GM12878 (cell line): ENCODE measurements at regions of chr5 and their contacts with region 1.

Region 1: DNA sequence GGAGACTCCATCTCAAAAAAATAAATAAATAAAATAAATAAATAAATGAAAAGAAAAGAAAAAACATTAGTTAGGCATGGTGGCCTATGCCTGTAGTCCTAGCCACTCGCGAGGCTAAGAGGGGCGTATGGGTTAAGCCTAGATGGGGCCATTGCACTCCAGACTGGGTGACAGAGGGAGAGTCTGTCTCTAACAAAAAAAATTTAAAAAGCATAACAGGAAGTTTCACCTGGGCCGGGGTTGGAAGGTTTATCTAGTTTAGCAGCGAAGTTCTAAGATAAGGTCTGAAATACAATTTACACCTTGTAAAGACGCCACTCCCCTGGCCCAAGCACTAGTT is 18.0 kb downstream of the ZMAT2 start:
- DNase-seq: no peak
- ATAC-seq: peak; percentile 11; the same call in 2 of the 3 replicates
- H3K4me3 ChIP-seq: no peak overlapping the region
- H3K27ac ChIP-seq: no peak overlapping the region
- H3K4me1 ChIP-seq: no peaks in the 10 kb centered on the region
- H3K27me3 ChIP-seq: no peaks in the 10 kb centered on the region
- CTCF ChIP-seq: no peak
- EP300 ChIP-seq: no peak
- POLR2A ChIP-seq: no peak
- RAD21 ChIP-seq: no peak

Region 2: DNA sequence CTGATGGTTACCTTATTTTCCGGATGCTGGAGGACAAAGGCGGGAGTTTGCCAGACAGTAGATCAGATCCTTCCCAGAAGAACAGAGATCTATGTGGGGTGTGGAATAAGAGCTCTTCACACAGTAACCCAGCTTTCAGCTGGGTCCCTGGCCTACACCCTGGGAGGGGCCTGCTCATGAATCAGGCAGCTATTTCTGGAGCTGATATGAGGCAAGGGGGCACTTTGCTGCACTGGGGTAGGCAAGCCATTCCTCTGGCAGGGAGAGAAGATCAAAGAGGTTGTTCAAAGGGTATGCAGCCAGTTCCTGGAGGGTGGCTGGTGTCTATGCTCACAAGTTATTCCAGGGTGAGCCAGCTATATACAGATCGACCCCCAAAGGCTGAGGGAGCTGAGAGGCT is 494.6 kb before region 1 on chr5:
- CTCF ChIA-PET with region 1: no interaction called
- POLR2A ChIA-PET with region 1: no interaction called
- RAD21 ChIA-PET with region 1: no interaction called
- SMC1A ChIA-PET with region 1: no interaction called
- in situ Hi-C with region 1: no loop called
- intact Hi-C with region 1: no loop called
- DNase-seq: no peak
- ATAC-seq: no peak
- H3K4me3 ChIP-seq: no peak overlapping the region
- H3K27ac ChIP-seq: no peak overlapping the region
- H3K4me1 ChIP-seq: peaks cover 30% of the 10 kb centered on the region
- H3K27me3 ChIP-seq: no peaks in the 10 kb centered on the region
- CTCF ChIP-seq: no peak
- EP300 ChIP-seq: no peak
- POLR2A ChIP-seq: no peak
- RAD21 ChIP-seq: no peak

Region 3: DNA sequence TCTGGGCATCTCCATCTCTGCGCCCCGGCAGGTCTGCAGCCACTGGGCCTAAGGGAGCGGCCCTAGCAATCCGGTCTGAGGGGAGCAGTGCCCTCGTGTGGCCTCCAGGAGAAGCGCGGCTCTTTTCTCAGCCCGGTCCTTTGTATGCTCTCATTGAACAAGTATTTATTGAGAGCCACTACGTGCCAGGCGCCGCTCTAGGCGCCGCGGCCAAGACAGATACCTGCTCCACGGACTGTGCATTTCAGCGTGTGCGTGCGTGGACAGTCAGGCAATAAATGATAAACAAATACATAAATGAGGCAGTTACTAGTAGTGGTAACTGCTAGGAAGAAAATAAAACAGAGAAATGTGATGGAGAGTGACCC is 360.5 kb before region 1 on chr5:
- CTCF ChIA-PET with region 1: interaction called, 36 read pairs
- POLR2A ChIA-PET with region 1: no interaction called
- RAD21 ChIA-PET with region 1: interaction called, 34 read pairs
- SMC1A ChIA-PET with region 1: interaction called, 3 read pairs
- in situ Hi-C with region 1: loop called (anchors 5 kb)
- intact Hi-C with region 1: loop called (anchors 2 kb)
- DNase-seq: no peak
- ATAC-seq: peak; percentile 98
- H3K4me3 ChIP-seq: no peak overlapping the region
- H3K27ac ChIP-seq: no peak overlapping the region
- H3K4me1 ChIP-seq: peaks cover 11% of the 10 kb centered on the region
- H3K27me3 ChIP-seq: no peaks in the 10 kb centered on the region
- CTCF ChIP-seq: peak; percentile 92 to 97 (median 96)
- EP300 ChIP-seq: no peak
- POLR2A ChIP-seq: no peak
- RAD21 ChIP-seq: peak; percentile 85

Region 4: DNA sequence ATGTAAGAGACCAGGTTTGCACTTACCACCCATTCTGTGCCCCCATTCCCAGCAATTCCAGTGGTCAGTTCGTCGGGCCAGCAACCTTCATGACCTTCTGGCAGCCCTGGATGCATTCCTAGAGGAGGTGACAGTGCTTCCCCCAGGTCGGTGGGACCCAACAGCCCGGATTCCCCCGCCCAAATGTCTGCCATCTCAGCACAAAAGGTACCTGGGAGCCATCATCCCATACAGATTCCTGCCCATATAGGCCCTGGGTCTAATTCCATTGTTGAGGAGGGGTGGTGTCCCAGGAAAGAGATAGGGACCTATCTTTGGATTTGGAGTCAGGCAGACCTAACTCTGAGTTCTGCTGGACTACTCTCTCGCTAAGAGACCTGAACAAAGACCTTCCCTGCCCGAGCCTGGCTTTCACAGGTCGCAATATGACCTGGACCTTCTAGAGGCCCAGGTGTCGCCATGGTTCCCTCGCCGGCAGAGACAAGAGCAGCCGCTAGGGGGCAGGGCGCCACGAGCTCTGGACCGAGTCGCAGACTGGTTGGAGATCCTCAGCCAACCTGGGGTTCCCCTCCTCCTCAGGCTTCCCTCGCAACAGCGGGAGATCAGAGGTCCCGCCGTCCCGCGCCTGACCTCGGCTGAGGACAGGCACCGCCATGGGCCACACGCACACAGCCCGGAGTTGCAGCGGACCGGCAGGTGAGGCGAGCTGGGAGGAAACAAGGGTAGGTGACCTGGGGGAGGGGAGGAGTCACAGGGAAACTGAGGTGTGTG is 355.2 kb before region 1 on chr5:
- CTCF ChIA-PET with region 1: interaction called, 36 read pairs
- POLR2A ChIA-PET with region 1: no interaction called
- RAD21 ChIA-PET with region 1: interaction called, 34 read pairs
- SMC1A ChIA-PET with region 1: interaction called, 6 read pairs
- in situ Hi-C with region 1: loop called (anchors 5 kb)
- intact Hi-C with region 1: loop called (anchors 2 kb)
- DNase-seq: no peak
- ATAC-seq: peak; percentile 97
- H3K4me3 ChIP-seq: peak overlapping the region; percentile 57; the same call in 1 of the 2 replicates
- H3K27ac ChIP-seq: no peak overlapping the region
- H3K4me1 ChIP-seq: no peaks in the 10 kb centered on the region; the same call in 1 of the 2 replicates
- H3K27me3 ChIP-seq: no peaks in the 10 kb centered on the region
- CTCF ChIP-seq: peak; percentile 96 to 97 (median 96)
- EP300 ChIP-seq: no peak
- POLR2A ChIP-seq: no peak
- RAD21 ChIP-seq: peak; percentile 72

Region 5: DNA sequence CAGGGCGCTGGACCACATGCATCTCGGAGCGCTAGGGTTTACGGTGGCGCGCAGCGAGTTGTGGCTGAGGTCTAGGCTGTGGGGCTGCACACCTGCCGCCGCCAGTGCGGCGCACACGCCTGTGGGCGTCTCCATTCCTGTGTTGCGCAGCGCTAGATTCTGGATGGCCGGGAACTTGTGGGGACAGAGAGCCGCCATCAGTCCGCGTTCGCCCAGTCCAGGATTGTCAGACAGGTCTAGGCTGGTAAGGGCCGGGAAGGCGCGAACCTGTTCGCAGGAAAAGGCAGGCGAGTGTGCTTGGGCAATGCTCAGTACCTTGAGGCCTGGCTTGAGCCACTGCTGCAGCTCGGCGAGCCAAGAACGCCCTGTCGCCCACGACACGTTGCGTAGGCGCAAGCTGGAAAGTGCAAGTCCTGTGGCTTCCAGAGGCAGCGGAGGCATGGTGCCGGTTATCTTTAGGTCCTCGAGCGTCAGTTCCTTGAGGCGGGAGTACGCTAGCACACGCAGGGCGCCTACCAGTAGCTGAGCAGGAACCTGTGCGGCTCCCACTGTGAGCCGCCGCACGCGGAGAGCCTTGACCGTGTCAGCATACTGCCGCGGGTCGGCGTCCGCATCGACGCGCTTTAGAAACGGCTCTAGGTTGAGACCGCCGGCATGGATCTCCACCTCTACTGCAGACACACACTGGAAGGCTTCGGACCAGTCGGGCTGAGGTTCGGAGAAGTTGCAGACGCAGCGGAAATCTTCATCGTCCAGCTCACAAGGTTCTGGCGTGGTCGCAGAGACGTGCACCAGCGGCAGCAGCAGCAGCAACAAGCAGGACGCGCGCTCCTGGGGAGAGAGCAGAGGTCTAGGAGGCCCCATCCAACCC is 85.8 kb before region 1 on chr5:
- CTCF ChIA-PET with region 1: interaction called, 11 read pairs
- POLR2A ChIA-PET with region 1: no interaction called
- RAD21 ChIA-PET with region 1: no interaction called
- SMC1A ChIA-PET with region 1: interaction called, 4 read pairs
- in situ Hi-C with region 1: no loop called
- intact Hi-C with region 1: no loop called
- DNase-seq: no peak
- ATAC-seq: peak; percentile 71
- H3K4me3 ChIP-seq: peak overlapping the region; percentile 58
- H3K27ac ChIP-seq: no peak overlapping the region
- H3K4me1 ChIP-seq: peaks cover 13% of the 10 kb centered on the region
- H3K27me3 ChIP-seq: peaks cover 3 to 4% of the 10 kb centered on the region in 2 experiments; a peak in 2 of 4 replicates
- CTCF ChIP-seq: no peak
- EP300 ChIP-seq: no peak
- POLR2A ChIP-seq: no peak; the same call in 1 of the 2 replicates
- RAD21 ChIP-seq: no peak

Region 6: DNA sequence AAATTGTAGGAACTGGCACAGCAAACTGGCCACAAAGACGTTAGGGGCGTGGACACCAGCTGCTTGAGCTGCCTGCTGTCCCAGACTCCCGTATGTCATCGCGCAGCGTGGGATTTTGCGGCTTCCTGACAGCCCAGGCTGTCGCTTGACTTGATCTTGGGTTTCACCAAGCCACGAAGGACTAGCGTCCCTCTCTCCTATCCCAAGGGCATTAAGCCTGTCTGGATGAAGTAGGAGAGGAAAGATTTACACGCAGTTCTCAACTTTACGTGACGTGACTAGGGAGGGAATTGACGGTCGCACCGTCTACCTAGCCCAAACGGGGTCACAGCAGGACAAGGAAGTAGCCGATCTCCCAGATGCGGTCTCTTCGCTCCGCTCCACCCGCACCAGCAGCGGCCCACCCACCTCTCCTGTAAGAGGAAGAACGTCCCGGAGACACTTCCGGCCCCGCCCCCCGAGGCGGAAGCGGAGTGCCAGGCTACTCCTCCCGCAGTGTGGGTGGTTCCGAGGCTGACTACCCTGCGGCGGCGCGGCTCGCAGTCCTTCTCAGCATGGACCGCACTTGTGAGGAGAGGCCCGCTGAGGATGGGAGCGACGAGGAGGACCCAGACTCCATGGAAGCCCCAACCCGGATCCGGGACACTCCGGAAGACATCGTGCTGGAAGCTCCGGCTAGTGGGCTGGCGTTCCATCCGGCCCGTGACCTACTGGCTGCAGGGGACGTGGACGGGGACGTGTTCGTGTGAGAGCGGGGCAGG is 53.7 kb before region 1 on chr5 and contains the start of gene WDR55:
- CTCF ChIA-PET with region 1: no interaction called
- POLR2A ChIA-PET with region 1: no interaction called
- RAD21 ChIA-PET with region 1: no interaction called
- SMC1A ChIA-PET with region 1: no interaction called
- in situ Hi-C with region 1: no loop called
- intact Hi-C with region 1: loop called (anchors 2 kb)
- DNase-seq: peak; percentile 71
- ATAC-seq: peak; percentile 98
- H3K4me3 ChIP-seq: peak within 1 kb of the TSS; percentile 96
- H3K27ac ChIP-seq: peak within 1 kb of the TSS; percentile 85
- H3K4me1 ChIP-seq: no peaks in the 10 kb centered on the region
- H3K27me3 ChIP-seq: no peaks in the 10 kb centered on the region
- CTCF ChIP-seq: no peak
- EP300 ChIP-seq: peak in 1 of 2 experiments; percentile 3; a peak in 1 of 4 replicates
- POLR2A ChIP-seq: peak; percentile 98
- RAD21 ChIP-seq: no peak
- polyA plus RNA-seq, gene WDR55: 3.4 to 3.7 TPM

Region 7: GRCh38 chr5:140882591-140882899 is 164.3 kb after region 1 on chr5:
- CTCF ChIA-PET with region 1: no interaction called
- POLR2A ChIA-PET with region 1: no interaction called
- RAD21 ChIA-PET with region 1: no interaction called
- SMC1A ChIA-PET with region 1: no interaction called
- in situ Hi-C with region 1: no loop called
- intact Hi-C with region 1: no loop called
- DNase-seq: no peak
- ATAC-seq: no peak
- H3K4me3 ChIP-seq: no peak overlapping the region
- H3K27ac ChIP-seq: no peak overlapping the region
- H3K4me1 ChIP-seq: no peaks in the 10 kb centered on the region
- H3K27me3 ChIP-seq: no peaks in the 10 kb centered on the region
- CTCF ChIP-seq: no peak
- EP300 ChIP-seq: no peak
- POLR2A ChIP-seq: no peak
- RAD21 ChIP-seq: no peak